BJ (cell line): ENCODE measurements at regions of chr11 and their contacts with region 1.

Region 1: GRCh38 chr11:68900841-68901381 is 2.7 kb downstream of the MRPL21 start:
- DNase-seq: no peak
- H3K4me3 ChIP-seq: no peak overlapping the region
- H3K27me3 ChIP-seq: no peaks in the 10 kb centered on the region
- CTCF ChIP-seq: no peak

Region 2: GRCh38 chr11:68889948-68890446 is 10.9 kb before region 1 on chr11:
- CTCF ChIA-PET with region 1: interaction called, 15 read pairs
- POLR2A ChIA-PET with region 1: no interaction called
- DNase-seq: peak; percentile 94
- H3K4me3 ChIP-seq: no peak overlapping the region
- H3K27me3 ChIP-seq: no peaks in the 10 kb centered on the region
- CTCF ChIP-seq: peak; percentile 91